Breast epithelium (tissue), 4 donors: ENCODE measurements at regions of chr2 and their contacts with region 1.

Region 1: GRCh38 chr2:650343-651310 is 26.6 kb downstream of the TMEM18 start:
- DNase-seq: peak in 1 of 2 donors; percentile 12
- H3K4me3 ChIP-seq: no peak overlapping the region
- H3K27ac ChIP-seq: peak overlapping the region in 1 of 2 donors; percentile 19
- H3K4me1 ChIP-seq: no peaks in the 10 kb centered on the region
- H3K27me3 ChIP-seq: peaks cover 0 to 4% of the 10 kb centered on the region in 2 donors
- CTCF ChIP-seq: no peak
- POLR2A ChIP-seq: no peak

Region 2: DNA sequence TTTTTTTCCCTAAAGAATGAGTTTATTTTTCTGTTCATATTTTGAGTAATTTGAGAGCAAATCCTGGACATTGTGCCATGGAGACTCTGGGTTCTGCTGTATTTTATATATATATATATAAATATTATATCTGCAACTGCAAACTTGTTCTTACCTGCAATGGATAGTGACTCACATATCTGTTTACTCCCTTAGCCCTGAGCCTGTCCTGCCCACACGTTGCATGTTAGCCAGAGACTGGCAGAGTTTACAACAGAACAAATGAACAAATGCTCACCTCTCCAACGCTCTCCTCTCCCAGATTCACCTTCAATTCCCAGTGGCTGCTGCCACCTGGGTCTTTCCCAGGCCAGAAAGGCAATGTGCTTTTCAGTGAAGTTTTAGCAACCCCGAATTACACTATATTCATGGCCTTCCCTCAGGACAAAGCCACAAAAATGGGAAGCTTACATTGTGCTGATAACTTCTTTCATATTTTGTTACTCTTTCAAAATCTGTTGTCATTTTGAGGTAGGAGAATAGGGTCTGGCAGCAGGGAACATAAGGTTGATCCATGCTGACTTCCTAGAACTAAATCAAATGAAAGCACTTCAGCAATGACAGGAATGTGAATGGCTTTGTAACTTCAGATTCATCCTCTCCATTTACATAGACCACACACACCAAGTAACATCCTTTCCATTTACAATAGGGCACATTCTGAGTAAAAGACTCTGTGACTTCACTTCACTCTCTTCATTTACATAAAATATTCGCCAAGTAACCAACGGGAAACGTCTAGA is 498.9 kb before region 1 on chr2:
- intact Hi-C with region 1: no loop called
- DNase-seq: no peak
- H3K4me3 ChIP-seq: no peak overlapping the region
- H3K27ac ChIP-seq: no peak overlapping the region
- H3K4me1 ChIP-seq: no peaks in the 10 kb centered on the region
- H3K27me3 ChIP-seq: no peaks in the 10 kb centered on the region
- CTCF ChIP-seq: no peak
- POLR2A ChIP-seq: no peak

Region 3: DNA sequence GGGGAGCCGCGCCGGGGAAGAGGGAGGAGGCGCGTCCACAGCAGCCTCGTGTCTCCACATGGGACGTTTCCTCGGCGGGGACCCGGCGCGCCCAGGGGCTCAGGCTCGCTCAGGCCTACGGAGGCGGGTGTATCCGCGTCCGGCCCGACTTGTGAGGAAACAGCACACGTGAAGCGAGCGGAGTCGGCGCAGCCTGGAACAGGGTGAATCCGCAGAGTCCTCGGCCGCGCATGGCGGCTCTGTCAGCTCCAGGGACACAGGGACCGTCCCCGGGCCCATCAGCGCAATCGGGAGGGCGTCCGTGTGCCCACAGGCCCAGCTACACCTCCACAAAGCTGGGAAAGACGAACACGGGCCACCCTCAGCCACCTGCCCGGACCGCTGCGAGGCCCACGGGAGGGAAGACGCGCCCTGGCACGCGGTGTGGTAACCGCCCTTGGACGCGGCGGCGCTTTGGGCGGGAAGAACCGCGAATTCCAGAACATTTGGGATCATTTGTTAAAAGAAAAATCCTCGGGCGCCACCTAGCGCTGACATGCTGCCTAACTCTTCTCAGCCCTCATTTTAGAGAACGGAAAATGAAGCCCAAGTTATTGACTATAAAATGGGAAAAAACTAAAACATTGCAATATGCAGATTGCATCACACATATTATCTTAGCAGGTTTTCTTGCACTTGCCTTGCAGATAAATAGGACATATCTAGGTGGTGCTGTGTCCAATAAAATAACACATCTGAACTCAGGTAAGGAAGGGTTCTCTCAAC is 13.8 kb before region 1 on chr2:
- intact Hi-C with region 1: loop called (anchors 1 kb)
- DNase-seq: peak; percentile 69 to 76
- H3K4me3 ChIP-seq: peak overlapping the region; percentile 22 to 59 (median 40)
- H3K27ac ChIP-seq: peak overlapping the region in 1 of 2 donors; percentile 57
- H3K4me1 ChIP-seq: peaks cover 0 to 3% of the 10 kb centered on the region in 2 donors
- H3K27me3 ChIP-seq: no peaks in the 10 kb centered on the region
- CTCF ChIP-seq: peak; percentile 89 to 95 (median 91)
- POLR2A ChIP-seq: no peak

Region 4: GRCh38 chr2:689877-690510 is 39.4 kb after region 1 on chr2:
- intact Hi-C with region 1: no loop called
- DNase-seq: no peak
- H3K4me3 ChIP-seq: peak overlapping the region in 1 of 3 donors; percentile 41
- H3K27ac ChIP-seq: peak overlapping the region; percentile 51 to 73
- H3K4me1 ChIP-seq: no peaks in the 10 kb centered on the region
- H3K27me3 ChIP-seq: no peaks in the 10 kb centered on the region
- CTCF ChIP-seq: no peak
- POLR2A ChIP-seq: no peak